HEK293 (cell line): ENCODE measurements at regions of chr1 and their contacts with region 1.

Region 1: DNA sequence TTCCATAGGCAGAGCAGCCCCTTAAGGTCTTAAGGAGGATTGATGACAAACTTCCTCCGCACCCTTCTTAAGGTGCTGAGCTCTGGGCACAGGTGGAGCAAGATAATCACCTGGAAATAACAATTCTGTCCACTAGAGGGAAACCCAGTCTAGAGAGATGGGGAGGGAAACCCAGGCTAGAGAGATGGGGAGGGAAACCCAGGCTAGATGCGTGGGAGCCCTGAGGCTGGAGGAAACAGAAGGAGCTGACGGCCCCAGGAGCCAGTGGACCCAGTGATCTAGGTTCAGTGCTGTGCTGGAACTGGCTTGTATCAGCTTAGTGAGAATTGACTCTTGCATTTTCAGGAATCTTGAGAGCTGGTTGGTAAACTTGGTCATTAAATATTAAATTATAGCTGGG is 17.8 kb upstream of the MYCL start:
- H3K4me3 ChIP-seq: no peak overlapping the region
- H3K27ac ChIP-seq: no peak overlapping the region
- H3K4me1 ChIP-seq: no peaks in the 10 kb centered on the region
- CTCF ChIP-seq: peak; percentile 64; the same call in 1 of the 2 replicates

Region 2: DNA sequence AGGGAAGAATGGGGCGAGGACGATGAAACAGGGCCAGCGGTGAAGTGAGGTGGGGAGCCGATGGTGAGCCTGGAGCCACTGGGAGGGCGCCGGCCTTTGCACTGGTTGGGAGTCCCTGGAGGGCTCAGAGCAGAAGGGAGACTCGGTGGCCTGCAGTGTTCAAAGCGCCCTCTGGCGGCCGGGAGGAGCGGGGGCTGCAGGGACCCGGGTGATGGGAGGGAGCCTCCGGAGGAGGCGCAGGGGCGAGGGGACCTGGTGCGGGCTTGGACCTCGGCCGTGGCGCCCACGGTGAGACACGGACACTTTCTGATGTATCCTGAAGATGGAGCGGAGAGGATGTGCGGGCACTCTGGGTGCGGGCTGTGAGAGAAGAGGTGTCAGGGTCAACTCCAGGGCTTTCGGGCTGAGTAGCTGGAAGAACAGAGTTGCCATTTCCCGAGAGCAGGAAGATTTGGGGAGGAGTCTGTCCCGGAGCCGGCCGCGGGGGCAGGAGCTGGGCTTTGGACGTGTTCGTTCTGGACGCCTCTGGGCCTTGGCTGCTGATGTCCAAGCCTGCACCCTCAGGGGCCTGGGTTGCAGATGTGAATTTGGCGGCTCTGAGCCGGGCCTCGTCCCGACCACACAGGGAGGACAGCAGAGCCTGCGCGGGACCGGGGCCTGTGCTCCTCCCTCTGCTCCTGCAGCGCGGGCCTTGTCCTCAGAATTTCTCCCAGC is 309.8 kb before region 1 on chr1:
- CTCF ChIA-PET with region 1: no interaction called
- POLR2A ChIA-PET with region 1: no interaction called
- H3K4me3 ChIP-seq: no peak overlapping the region
- H3K27ac ChIP-seq: no peak overlapping the region
- H3K4me1 ChIP-seq: no peaks in the 10 kb centered on the region
- CTCF ChIP-seq: peak; percentile 81; the same call in 1 of the 2 replicates

Region 3: DNA sequence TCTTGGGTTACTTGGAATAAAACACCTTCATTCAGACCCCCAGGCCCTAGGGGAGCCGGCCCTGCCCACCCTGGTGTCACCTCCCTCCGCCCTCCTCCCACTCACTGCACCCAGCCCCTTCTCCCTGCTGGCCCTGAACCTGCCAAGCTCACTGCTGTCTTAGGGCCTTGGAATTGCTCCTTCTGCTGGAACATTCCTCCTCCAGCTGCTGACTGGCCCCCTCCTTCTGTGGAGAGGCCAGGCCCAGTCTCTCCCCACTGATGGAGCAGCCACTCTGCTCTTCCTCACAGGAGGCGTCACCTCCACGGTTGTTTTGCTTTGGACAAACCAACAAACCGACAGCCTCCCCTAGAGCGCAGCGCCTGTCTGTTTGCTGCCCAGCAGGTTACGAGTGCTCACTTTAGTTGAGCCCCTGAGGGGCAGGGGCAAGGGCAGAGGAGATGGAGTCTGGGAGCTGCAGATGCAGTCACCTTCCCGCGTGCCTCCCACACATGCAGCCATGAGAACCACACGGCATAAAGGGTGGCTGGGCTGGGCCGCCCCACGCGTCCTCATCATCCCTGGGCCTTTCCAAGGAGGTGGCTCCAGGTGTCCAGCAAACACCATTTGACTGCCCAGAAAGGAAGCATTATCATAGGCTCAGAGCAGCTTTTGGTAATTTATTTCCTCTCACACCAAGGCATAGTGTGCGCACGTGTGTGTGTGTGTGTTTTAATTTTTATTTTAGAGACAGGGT is 157.9 kb before region 1 on chr1:
- CTCF ChIA-PET with region 1: no interaction called
- POLR2A ChIA-PET with region 1: no interaction called
- H3K4me3 ChIP-seq: no peak overlapping the region
- H3K27ac ChIP-seq: no peak overlapping the region
- H3K4me1 ChIP-seq: no peaks in the 10 kb centered on the region
- CTCF ChIP-seq: no peak

Region 4: GRCh38 chr1:39816415-39817090 is 103.0 kb before region 1 on chr1:
- CTCF ChIA-PET with region 1: interaction called, 27 read pairs
- POLR2A ChIA-PET with region 1: interaction called, 3 read pairs
- H3K4me3 ChIP-seq: no peak overlapping the region
- H3K27ac ChIP-seq: no peak overlapping the region
- H3K4me1 ChIP-seq: no peaks in the 10 kb centered on the region
- CTCF ChIP-seq: peak; percentile 76

Region 5: GRCh38 chr1:39892601-39893595 is 26.6 kb before region 1 on chr1:
- CTCF ChIA-PET with region 1: interaction called, 14 read pairs
- POLR2A ChIA-PET with region 1: no interaction called
- H3K4me3 ChIP-seq: no peak overlapping the region
- H3K27ac ChIP-seq: no peak overlapping the region
- H3K4me1 ChIP-seq: peaks cover 7% of the 10 kb centered on the region; the same call in 1 of the 2 replicates
- CTCF ChIP-seq: no peak

Region 6: GRCh38 chr1:39907528-39908453 is 11.8 kb before region 1 on chr1:
- CTCF ChIA-PET with region 1: interaction called, 39 read pairs
- POLR2A ChIA-PET with region 1: no interaction called
- H3K4me3 ChIP-seq: no peak overlapping the region
- H3K27ac ChIP-seq: no peak overlapping the region
- H3K4me1 ChIP-seq: no peaks in the 10 kb centered on the region
- CTCF ChIP-seq: no peak

Region 7: DNA sequence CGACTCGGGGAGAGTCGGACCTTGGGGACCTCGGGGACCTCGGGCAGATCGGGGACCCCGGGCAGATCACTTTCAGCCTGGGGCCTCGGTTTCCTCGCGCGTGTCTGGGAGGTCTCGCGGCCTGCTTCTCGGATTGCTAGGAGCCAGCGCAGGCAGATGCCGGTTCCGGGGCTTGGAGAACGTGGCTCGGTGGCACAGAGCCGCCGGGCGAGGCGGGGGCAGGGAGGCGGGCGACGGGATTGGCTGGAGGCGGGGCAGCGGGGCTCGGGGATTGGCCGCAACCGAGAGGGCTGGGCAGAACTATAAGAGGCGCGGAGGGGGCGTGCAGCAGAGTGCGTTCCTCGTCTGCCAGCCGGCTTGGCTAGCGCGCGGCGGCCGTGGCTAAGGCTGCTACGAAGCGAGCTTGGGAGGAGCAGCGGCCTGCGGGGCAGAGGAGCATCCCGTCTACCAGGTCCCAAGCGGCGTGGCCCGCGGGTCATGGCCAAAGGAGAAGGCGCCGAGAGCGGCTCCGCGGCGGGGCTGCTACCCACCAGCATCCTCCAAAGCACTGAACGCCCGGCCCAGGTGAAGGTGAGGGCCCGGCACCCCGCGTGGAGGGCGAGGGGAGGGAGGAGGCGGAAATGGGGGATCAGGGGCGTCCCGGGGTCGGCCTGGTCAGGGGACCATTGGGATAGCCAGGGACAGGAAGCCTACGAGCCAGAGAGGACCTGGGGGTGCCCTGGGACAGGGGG is 35.4 kb after region 1 on chr1 and contains the start of gene MFSD2A:
- CTCF ChIA-PET with region 1: interaction called, 30 read pairs
- POLR2A ChIA-PET with region 1: interaction called, 4 read pairs
- H3K4me3 ChIP-seq: peak within 1 kb of the TSS; percentile 49
- H3K27ac ChIP-seq: no peak within 1 kb of the TSS; the same call in 1 of the 2 replicates
- H3K4me1 ChIP-seq: no peaks in the 10 kb centered on the region
- CTCF ChIP-seq: no peak

Region 8: GRCh38 chr1:40032240-40032891 is 112.8 kb after region 1 on chr1:
- CTCF ChIA-PET with region 1: interaction called, 131 read pairs
- POLR2A ChIA-PET with region 1: no interaction called
- H3K4me3 ChIP-seq: no peak overlapping the region
- H3K27ac ChIP-seq: no peak overlapping the region
- H3K4me1 ChIP-seq: no peaks in the 10 kb centered on the region
- CTCF ChIP-seq: 0 out of 2 replicates have a peak, but pooled peaks have one; percentile 28

Region 9: DNA sequence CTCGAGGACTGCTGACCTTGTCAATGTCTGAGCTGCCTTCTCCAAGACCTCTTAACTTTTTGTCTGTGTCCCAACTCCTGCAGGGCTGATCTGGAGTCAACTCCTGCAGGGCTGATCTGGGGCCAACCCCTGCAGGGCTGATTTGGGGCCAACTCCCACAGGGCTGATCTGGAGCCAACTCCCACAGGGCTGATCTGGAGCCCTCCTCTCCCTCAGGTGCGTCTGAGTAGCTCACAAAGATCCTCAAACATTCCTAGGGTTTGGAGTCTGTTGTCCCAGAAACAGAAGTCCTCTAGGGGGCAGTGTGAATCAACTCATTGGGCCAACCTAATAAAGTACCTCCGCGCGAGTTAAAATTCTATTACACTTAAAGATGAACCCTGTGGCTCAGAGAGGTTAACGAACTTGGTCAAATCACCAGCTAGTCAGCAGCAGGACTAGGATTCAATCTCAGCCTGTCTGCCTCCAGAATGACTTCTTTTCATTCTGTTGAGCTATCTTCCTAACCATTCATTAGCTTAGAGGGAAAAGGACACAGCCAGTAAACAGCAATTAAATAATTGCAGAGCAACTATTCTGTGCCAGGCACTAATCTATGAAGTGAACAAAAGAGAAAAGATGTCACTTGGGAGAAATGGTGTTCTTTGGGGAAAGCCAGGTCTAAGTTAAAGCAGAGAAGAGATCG is 224.5 kb after region 1 on chr1:
- CTCF ChIA-PET with region 1: no interaction called
- POLR2A ChIA-PET with region 1: no interaction called
- H3K4me3 ChIP-seq: no peak overlapping the region
- H3K27ac ChIP-seq: no peak overlapping the region
- H3K4me1 ChIP-seq: no peaks in the 10 kb centered on the region
- CTCF ChIP-seq: no peak; the same call in 1 of the 2 replicates